ENCODE measurements at regions of chr3 and their contacts with region 1.

Region 1: GRCh38 chr3:31622636-31623288 is 90.0 kb downstream of the STT3B start:
- DNase-seq: peak; percentile 41
- ATAC-seq: peak; percentile 80
- H3K4me3 ChIP-seq: no peak overlapping the region
- H3K27ac ChIP-seq: peak overlapping the region; percentile 0; the same call in 1 of the 2 replicates
- H3K4me1 ChIP-seq: peaks cover 25% of the 10 kb centered on the region
- H3K27me3 ChIP-seq: no peaks in the 10 kb centered on the region
- CTCF ChIP-seq: no peak
- EP300 ChIP-seq: peak; percentile 84 to 85
- POLR2A ChIP-seq: no peak
- RAD21 ChIP-seq: no peak

Region 2: GRCh38 chr3:31227131-31227562 is 395.6 kb before region 1 on chr3:
- CTCF ChIA-PET with region 1: no interaction called
- POLR2A ChIA-PET with region 1: no interaction called
- RAD21 ChIA-PET with region 1: interaction called, 3 read pairs
- SMC1A ChIA-PET with region 1: interaction called, 5 read pairs
- in situ Hi-C with region 1: no loop called
- intact Hi-C with region 1: loop called (anchors 5 kb)
- DNase-seq: peak; percentile 80
- ATAC-seq: peak; percentile 80
- H3K4me3 ChIP-seq: no peak overlapping the region
- H3K27ac ChIP-seq: peak overlapping the region; percentile 44
- H3K4me1 ChIP-seq: peaks cover 45% of the 10 kb centered on the region
- H3K27me3 ChIP-seq: no peaks in the 10 kb centered on the region
- CTCF ChIP-seq: no peak
- EP300 ChIP-seq: peak in 1 of 2 experiments; percentile 75; a peak in 2 of 4 replicates
- POLR2A ChIP-seq: no peak
- RAD21 ChIP-seq: no peak

Region 3: DNA sequence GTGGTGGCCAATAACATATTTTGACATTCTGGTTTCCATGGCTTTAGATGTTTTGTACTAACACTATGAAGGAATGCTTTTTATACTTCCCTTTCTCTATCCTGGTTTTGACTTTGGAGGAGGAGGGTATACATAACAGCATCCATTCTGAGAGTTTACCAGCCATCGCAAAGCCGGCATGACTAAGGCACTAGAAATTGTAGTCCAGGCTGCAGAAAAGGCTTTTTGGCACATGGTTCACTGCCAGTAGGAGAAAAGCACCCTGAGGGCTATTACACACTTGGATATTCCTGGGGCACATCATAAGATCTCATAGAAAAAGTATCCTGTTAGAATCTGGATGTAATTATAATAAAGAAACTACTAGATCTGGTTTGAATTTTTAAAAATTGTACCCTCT is 11.7 kb after region 1 on chr3:
- CTCF ChIA-PET with region 1: interaction called, 4 read pairs
- POLR2A ChIA-PET with region 1: interaction called, 3 read pairs
- RAD21 ChIA-PET with region 1: interaction called, 3 read pairs
- SMC1A ChIA-PET with region 1: interaction called, 28 read pairs
- in situ Hi-C with region 1: no loop called
- intact Hi-C with region 1: no loop called
- DNase-seq: no peak
- ATAC-seq: no peak
- H3K4me3 ChIP-seq: no peak overlapping the region
- H3K27ac ChIP-seq: no peak overlapping the region
- H3K4me1 ChIP-seq: peaks cover 7% of the 10 kb centered on the region; the same call in 1 of the 2 replicates
- H3K27me3 ChIP-seq: no peaks in the 10 kb centered on the region
- CTCF ChIP-seq: no peak
- EP300 ChIP-seq: no peak
- POLR2A ChIP-seq: no peak
- RAD21 ChIP-seq: no peak

Region 4: DNA sequence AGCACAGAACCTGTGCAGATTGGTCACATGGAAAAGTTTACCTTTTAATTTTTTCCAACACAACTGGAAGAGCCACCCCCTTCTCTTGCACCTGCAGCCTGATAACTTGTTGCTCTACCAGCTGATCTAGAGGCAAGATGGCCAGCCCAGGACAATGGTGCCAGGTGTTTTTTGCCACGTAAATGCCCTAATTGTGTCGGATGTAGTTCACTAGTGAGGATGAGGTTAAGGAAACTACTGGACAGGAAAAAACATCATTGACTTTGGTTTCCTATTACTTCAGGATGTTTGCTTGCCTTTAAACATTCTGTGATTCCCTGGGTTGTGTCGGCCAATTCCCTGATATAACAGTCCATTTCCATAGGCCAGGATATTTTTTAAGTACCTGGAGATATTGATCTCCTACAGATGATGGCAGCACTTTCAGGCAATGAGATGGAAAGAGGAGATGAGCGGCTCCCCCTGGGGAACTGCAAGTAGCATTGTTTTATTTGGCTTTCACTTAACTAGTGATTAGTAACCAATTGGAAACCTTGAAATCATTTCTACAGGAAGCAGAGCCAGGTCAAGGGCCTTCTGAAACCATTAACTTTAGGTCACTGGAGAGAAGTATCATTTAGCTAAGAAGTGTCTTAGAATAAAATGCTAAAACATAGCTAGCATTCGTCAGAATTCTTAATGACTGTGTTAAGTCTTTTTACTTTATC is 285.8 kb after region 1 on chr3:
- CTCF ChIA-PET with region 1: no interaction called
- POLR2A ChIA-PET with region 1: no interaction called
- RAD21 ChIA-PET with region 1: no interaction called
- SMC1A ChIA-PET with region 1: no interaction called
- in situ Hi-C with region 1: no loop called
- intact Hi-C with region 1: no loop called
- DNase-seq: no peak
- ATAC-seq: peak; percentile 28; the same call in 1 of the 3 replicates
- H3K4me3 ChIP-seq: no peak overlapping the region
- H3K27ac ChIP-seq: no peak overlapping the region
- H3K4me1 ChIP-seq: no peaks in the 10 kb centered on the region
- H3K27me3 ChIP-seq: no peaks in the 10 kb centered on the region
- CTCF ChIP-seq: no peak
- EP300 ChIP-seq: no peak
- POLR2A ChIP-seq: no peak
- RAD21 ChIP-seq: no peak